PC-3 (cell line): ENCODE measurements at regions of chr2 and their contacts with region 1.

Region 1: DNA sequence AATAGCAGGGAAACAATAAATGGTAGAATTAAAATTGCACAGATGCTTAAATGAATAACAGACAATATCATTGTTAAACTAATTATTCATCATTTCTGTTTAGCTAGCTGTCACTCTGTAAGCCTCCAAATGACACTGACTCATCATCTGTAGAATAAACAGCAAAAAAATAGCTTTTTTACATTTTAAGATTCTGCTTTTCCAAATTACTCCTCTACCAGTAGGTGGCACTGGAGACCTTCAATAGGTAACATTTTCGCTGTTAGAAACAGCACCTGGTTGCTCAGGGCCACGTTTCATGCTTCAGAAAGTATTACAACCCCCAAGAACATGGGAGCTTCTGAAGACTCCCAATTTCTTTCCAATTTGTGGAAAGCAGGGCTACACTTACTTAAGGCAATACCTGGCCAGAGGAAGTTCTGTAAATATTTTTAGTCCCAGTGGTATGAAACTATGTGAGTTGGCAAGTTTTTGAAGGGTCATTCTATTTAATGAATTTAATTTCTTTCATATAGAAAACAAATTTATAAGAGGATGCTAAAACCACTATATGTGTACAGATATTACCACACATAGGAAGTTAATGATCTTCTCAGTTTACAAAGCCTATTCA is 45.4 kb downstream of the TTN start:
- DNase-seq: peak; percentile 85
- ATAC-seq: peak; percentile 53
- H3K4me3 ChIP-seq: no peak overlapping the region
- H3K27ac ChIP-seq: no peak overlapping the region
- H3K4me1 ChIP-seq: peaks cover 27% of the 10 kb centered on the region
- H3K27me3 ChIP-seq: no peaks in the 10 kb centered on the region
- CTCF ChIP-seq: peak; percentile 95

Region 2: DNA sequence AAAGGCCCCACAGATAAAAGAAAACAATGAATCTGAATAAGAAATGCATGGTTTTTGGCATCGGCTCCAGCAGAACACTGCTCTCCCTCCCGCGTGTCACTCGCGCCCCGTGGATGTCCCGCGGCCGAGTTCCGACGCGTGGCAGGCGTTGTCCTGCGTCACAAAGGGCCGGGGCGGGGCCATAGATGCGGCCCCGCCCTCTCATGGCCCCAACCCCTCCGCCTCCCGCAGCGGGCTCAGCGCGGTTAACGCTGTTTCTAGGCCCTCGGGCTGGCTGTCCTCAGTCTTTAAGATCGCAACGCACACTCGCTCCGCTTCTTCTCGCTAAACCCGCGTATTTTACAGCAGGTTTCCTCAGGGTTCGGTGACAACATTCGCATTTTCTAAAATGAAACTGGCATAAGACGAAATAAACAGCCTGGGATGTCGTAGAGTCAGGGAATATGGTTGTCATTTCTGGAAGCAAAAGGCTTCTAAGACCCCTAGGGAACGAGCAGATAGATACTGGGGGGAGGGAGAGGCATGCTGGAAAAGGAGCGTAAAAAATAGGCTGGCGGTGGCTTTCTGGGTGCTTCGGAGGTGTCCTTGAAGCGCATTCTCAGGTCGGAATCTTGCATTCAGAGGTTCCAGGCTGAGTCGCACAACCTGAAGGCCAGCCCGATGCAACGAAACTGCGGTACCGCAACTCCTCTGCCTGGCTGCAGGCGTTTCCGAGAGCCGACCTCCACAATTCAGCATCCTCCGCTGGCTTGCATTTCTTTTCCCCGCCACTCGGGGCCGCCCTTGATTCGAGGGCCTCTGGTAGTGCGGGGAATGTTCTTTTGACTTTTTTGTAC is 283.2 kb before region 1 on chr2 and contains the start of gene FKBP7:
- CTCF ChIA-PET with region 1: no interaction called
- POLR2A ChIA-PET with region 1: no interaction called
- intact Hi-C with region 1: loop called (anchors 10 kb)
- DNase-seq: peak; percentile 83
- ATAC-seq: peak; percentile 59
- H3K4me3 ChIP-seq: peak within 1 kb of the TSS; percentile 98
- H3K27ac ChIP-seq: peak within 1 kb of the TSS; percentile 39
- H3K4me1 ChIP-seq: peaks cover 29% of the 10 kb centered on the region
- H3K27me3 ChIP-seq: no peaks in the 10 kb centered on the region
- CTCF ChIP-seq: peak; percentile 91
- total RNA-seq, gene FKBP7: 3.7 and 4.2 TPM in 2 replicates

Region 3: DNA sequence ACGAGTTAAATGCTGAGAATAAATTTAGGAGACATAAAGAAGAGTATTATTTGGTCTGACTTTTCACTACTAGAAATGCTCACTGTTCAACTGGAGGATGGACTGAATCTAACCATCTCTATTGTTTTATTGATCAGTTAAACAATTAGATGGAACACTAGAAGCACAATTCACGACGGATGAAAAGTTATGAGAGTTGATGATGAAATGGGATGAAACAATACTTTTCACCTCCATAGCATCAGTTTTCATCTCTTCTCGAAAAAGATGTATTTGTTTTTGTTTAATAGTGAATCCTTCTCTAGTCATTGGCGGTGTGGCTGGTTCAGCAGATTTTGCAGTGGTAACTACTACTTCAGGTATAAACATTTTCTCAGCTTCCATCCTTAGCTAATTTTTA is 26.1 kb after region 1 on chr2:
- CTCF ChIA-PET with region 1: no interaction called
- POLR2A ChIA-PET with region 1: no interaction called
- intact Hi-C with region 1: loop called (anchors 2 kb)
- DNase-seq: no peak
- ATAC-seq: no peak
- H3K4me3 ChIP-seq: no peak overlapping the region
- H3K27ac ChIP-seq: no peak overlapping the region
- H3K4me1 ChIP-seq: no peaks in the 10 kb centered on the region
- H3K27me3 ChIP-seq: no peaks in the 10 kb centered on the region
- CTCF ChIP-seq: no peak

Region 4: DNA sequence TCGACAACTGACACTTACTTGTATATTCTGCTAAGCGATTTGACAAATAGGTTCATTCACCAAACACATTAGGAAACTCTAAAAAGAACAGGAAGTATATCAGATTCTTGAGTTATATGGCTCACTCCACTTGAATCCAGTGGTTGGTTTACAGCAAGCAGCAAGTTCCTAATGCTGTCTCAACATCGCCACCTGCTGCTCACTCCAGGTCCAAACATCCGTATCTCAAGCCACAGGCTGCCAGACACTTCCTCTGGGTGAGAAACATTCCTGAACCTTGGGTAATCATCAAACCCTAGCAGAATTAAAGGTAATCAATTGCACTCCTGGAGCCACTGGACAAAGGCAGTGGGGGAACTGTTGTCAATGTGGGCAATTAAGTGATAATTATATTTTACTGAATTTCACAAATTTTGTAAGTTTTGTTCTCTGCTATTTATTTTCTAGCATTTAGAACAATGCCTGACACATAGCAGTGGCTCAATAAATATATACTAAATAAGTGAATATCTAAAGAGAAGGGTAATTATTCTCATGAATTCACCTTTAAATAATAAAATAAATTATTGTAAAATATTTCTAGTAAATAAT is 152.5 kb after region 1 on chr2:
- CTCF ChIA-PET with region 1: interaction called, 6 read pairs
- POLR2A ChIA-PET with region 1: no interaction called
- intact Hi-C with region 1: loop called (anchors 1 kb)
- DNase-seq: peak; percentile 92
- ATAC-seq: peak; percentile 59
- H3K4me3 ChIP-seq: no peak overlapping the region
- H3K27ac ChIP-seq: no peak overlapping the region
- H3K4me1 ChIP-seq: peaks cover 52% of the 10 kb centered on the region
- H3K27me3 ChIP-seq: no peaks in the 10 kb centered on the region
- CTCF ChIP-seq: peak; percentile 94

Region 5: DNA sequence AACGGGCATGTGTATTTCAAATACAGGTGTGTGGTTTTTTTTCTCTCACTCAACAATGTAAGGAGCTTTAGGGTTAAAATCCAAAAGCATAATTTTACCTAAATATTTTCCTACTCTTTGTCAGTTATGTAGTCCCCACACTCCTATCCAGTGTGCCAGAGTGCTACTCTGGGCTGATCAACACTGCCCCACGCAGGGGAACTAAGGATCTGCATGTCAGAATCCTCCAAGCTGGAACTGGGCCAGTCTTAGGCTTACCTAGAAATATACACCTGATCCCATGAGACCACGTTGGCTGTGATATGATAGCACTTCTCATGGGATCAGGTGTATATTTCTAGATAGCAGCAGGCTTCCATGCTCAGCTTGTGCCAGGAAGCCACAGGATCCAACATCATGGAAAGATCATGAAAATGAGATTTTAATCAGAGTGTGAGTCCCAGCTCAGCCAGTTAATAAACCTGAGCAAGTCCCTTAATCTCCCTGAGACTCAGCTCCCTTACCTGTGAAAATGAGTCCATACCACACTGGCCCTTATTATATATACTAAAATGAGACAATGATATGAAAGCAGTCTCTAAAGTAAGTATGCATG is 258.4 kb after region 1 on chr2:
- CTCF ChIA-PET with region 1: interaction called, 6 read pairs
- POLR2A ChIA-PET with region 1: no interaction called
- intact Hi-C with region 1: loop called (anchors 2 kb)
- DNase-seq: peak; percentile 81
- ATAC-seq: peak; percentile 79
- H3K4me3 ChIP-seq: no peak overlapping the region
- H3K27ac ChIP-seq: no peak overlapping the region
- H3K4me1 ChIP-seq: no peaks in the 10 kb centered on the region
- H3K27me3 ChIP-seq: no peaks in the 10 kb centered on the region
- CTCF ChIP-seq: peak; percentile 85

Region 6: DNA sequence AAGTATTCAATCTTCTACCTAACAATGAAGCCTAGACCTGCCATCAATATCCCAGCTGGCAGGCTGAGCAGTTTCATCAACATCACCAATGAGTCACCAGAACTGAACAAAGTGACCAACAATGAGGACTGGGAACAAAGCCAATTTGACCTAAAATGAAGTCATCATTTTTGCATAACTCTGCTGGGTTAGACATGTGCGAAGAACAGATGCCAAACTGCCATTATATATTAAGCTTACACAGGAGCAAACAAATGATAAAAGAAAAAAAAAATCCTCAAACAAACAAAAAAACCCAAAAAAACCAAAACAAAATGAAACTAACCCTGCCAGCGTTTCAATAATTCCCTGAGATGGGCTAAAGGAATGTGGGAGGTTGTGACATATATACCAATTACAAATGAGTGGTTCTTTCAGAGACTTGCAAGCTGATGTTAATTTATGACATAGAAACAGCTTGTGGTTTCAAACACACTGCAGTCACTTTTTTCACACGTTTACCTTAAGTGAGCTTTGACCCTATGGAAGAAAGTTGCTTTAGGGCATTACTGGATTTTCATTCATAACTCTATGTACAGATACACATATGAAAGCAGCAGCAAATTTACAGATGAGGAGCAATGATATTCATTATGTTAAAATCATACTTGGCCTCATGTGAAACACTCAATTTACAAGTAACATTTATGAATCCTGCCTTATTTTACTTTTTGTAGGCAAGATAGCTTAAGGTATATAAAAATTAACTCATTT is 345.0 kb after region 1 on chr2:
- CTCF ChIA-PET with region 1: no interaction called
- POLR2A ChIA-PET with region 1: no interaction called
- intact Hi-C with region 1: loop called (anchors 10 kb)
- DNase-seq: peak; percentile 99
- ATAC-seq: peak; percentile 74
- H3K4me3 ChIP-seq: no peak overlapping the region
- H3K27ac ChIP-seq: peak overlapping the region; percentile 50
- H3K4me1 ChIP-seq: peaks cover 39% of the 10 kb centered on the region
- H3K27me3 ChIP-seq: no peaks in the 10 kb centered on the region
- CTCF ChIP-seq: no peak

Region 7: GRCh38 chr2:179129574-179130238 is 367.8 kb after region 1 on chr2:
- CTCF ChIA-PET with region 1: interaction called, 10 read pairs
- POLR2A ChIA-PET with region 1: no interaction called
- intact Hi-C with region 1: loop called (anchors 2 kb)
- DNase-seq: peak; percentile 56
- ATAC-seq: no peak
- H3K4me3 ChIP-seq: no peak overlapping the region
- H3K27ac ChIP-seq: no peak overlapping the region
- H3K4me1 ChIP-seq: no peaks in the 10 kb centered on the region
- H3K27me3 ChIP-seq: no peaks in the 10 kb centered on the region
- CTCF ChIP-seq: peak; percentile 82